PC-9 (cell line): ENCODE measurements at regions of chr17 and their contacts with region 1.

Region 1: DNA sequence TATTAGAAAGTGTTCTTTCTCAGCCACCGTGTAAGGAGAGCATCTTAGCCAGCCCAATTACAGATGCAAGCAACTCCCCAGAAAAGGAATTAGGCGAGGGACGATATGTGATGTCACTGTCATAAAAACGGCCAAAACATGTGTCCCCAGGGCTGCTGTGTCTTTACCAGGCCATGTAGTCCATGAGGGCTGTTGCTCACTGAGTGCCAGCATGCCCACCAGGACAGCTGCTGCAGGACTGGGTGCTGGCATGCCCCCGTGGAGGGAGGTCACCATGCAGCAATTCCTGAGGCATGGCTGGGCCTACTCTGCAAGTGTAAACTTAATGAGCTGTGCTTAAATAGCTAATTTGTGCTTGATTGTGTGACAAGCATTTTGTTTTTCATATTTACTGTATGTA is 156.9 kb downstream of the LGALS9B start:
- DNase-seq: no peak
- H3K4me3 ChIP-seq: no peak overlapping the region
- H3K27ac ChIP-seq: no peak overlapping the region
- H3K4me1 ChIP-seq: no peaks in the 10 kb centered on the region
- H3K27me3 ChIP-seq: no peaks in the 10 kb centered on the region
- CTCF ChIP-seq: no peak

Region 2: GRCh38 chr17:19958023-19958422 is 352.5 kb before region 1 on chr17:
- CTCF ChIA-PET with region 1: no interaction called
- POLR2A ChIA-PET with region 1: no interaction called
- intact Hi-C with region 1: no loop called
- DNase-seq: peak; percentile 52 to 92
- H3K4me3 ChIP-seq: no peak overlapping the region
- H3K27ac ChIP-seq: peak overlapping the region; percentile 40
- H3K4me1 ChIP-seq: peaks cover 24% of the 10 kb centered on the region
- H3K27me3 ChIP-seq: no peaks in the 10 kb centered on the region
- CTCF ChIP-seq: no peak

Region 3: GRCh38 chr17:20612635-20613034 is 302.2 kb after region 1 on chr17:
- CTCF ChIA-PET with region 1: no interaction called
- POLR2A ChIA-PET with region 1: interaction called, 10 read pairs
- intact Hi-C with region 1: no loop called
- DNase-seq: no peak
- H3K4me3 ChIP-seq: no peak overlapping the region
- H3K27ac ChIP-seq: no peak overlapping the region
- H3K4me1 ChIP-seq: peaks cover 3% of the 10 kb centered on the region; the same call in 1 of the 2 replicates
- H3K27me3 ChIP-seq: no peaks in the 10 kb centered on the region
- CTCF ChIP-seq: no peak